Prostate gland (tissue), 2 donors: ENCODE measurements at regions of chr5 and their contacts with region 1.

Region 1: GRCh38 chr5:179821581-179822432 is 1.1 kb downstream of the SQSTM1 start:
- DNase-seq: peak; percentile 97
- H3K4me3 ChIP-seq: peak overlapping the region; percentile 98 to 100
- H3K27ac ChIP-seq: peak overlapping the region; percentile 100
- H3K4me1 ChIP-seq: peaks cover 32% of the 10 kb centered on the region
- H3K27me3 ChIP-seq: no peaks in the 10 kb centered on the region
- CTCF ChIP-seq: peak in 1 of 4 experiments; percentile 37
- POLR2A ChIP-seq: peak; percentile 97

Region 2: GRCh38 chr5:179697993-179698934 is 123.5 kb before region 1 on chr5:
- intact Hi-C with region 1: loop called (anchors 5 kb)
- DNase-seq: peak; percentile 99
- H3K4me3 ChIP-seq: peak overlapping the region; percentile 77 to 98
- H3K27ac ChIP-seq: peak overlapping the region; percentile 91 to 95
- H3K4me1 ChIP-seq: no peaks in the 10 kb centered on the region
- H3K27me3 ChIP-seq: no peaks in the 10 kb centered on the region
- CTCF ChIP-seq: peak in 2 of 4 experiments; percentile 10 to 44
- POLR2A ChIP-seq: peak; percentile 82

Region 3: DNA sequence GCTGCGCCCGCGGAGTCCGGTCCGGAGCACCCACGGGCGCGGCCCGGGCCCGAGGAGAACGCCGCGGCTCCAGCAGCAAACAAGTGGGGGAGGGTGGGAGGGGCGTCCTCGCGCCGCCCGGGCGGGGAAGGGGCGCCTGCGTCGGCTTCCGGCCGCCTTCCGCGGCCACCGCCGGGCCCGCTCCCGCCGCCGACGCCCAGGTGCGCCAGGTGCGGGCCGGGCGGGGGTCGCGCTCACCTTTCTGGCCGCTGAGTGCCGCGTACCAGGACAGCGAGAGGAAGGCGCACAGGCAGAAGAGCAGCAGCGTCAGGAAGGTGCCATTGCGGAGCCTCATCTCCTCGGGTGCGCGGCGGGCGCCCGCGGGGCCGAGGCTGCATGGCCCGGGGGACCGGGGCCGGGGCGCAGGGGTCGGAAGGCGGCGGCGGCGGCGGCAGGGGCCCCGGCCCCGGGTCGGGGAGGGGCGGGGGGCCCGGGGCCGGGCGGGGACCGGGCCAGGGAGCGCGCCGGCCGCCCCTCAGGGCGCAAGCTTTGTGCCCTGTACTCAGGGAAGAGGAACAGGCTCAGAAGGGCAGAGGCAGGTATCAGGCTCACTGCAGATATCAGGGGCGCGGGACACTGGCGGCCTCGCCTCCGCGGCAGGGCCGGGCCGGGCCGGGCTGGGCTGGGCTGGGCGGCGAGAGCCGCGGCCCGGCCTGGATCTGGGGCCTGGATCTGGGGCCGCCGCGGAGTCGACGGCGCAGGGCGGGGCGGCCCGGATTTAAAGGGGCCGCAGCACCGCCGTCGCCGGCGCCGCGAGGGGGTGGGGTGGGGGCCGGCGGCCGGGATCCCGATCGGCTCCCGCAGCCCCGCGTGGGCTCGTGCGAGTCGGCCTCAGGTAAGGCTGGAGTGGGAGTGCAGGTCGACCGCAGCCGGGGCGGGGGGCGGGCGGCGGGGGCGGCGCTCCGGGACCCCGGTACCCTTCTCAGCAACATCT is 15.3 kb before region 1 on chr5 and contains the start of gene MGAT4B:
- intact Hi-C with region 1: loop called (anchors 2 kb)
- DNase-seq: peak; percentile 71
- H3K4me3 ChIP-seq: peak within 1 kb of the TSS; percentile 79 to 85
- H3K27ac ChIP-seq: peak within 1 kb of the TSS; percentile 94 to 95
- H3K4me1 ChIP-seq: peaks cover 12% of the 10 kb centered on the region
- H3K27me3 ChIP-seq: no peaks in the 10 kb centered on the region
- CTCF ChIP-seq: peak in 2 of 4 experiments; percentile 4 to 14
- POLR2A ChIP-seq: peak; percentile 72
- total RNA-seq, gene MGAT4B: 82.7 to 142 TPM

Region 4: DNA sequence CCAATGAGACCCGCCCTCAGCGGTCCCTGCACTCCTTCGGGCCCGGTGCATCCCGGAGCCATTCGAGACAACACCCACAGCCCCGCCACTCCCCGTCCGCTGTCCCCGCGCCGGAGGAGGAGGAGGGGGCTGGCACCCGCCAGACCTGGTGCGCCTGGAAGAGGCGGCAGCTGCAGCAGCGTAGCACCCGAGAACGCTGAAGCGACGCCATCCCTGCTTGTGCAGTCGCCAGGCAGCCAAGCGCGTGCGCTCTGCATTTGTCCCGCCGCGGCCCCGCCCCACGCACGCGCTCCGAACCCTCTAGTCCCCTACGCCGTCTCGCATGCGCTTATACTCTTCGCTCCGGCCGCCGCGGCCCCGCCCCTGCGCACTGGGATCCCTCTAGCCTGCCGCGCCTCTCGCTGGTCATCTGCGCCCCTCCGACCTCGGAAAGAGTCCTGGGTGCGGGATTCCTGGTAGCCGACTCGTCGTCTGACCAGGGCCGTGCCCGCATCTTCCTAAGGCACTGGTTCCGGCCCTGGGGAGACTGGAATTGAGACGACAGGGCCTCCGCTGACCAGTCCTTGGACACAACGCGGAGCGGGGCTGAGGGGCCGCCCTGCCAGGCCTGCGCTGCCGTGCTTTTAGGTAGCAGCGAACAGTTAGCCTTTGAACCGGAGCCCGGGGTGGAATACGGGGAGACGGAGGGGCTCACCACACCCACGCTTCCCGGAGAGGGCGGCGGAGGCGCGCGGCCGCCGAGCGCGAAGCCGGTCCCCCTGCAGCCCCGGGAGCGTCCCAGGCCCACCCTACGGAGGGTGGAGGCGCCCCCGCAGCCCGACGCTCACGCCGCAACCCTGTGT is 37.0 kb after region 1 on chr5 and contains the start of gene MRNIP:
- intact Hi-C with region 1: loop called (anchors 5 kb)
- DNase-seq: peak; percentile 97
- H3K4me3 ChIP-seq: peak within 1 kb of the TSS; percentile 63 to 85
- H3K27ac ChIP-seq: peak within 1 kb of the TSS; percentile 81 to 95
- H3K4me1 ChIP-seq: no peaks in the 10 kb centered on the region
- H3K27me3 ChIP-seq: no peaks in the 10 kb centered on the region
- CTCF ChIP-seq: peak in 3 of 4 experiments; percentile 23 to 44 (median 42)
- POLR2A ChIP-seq: peak; percentile 91
- total RNA-seq, gene MRNIP: 30.0 to 55.2 TPM

Region 5: DNA sequence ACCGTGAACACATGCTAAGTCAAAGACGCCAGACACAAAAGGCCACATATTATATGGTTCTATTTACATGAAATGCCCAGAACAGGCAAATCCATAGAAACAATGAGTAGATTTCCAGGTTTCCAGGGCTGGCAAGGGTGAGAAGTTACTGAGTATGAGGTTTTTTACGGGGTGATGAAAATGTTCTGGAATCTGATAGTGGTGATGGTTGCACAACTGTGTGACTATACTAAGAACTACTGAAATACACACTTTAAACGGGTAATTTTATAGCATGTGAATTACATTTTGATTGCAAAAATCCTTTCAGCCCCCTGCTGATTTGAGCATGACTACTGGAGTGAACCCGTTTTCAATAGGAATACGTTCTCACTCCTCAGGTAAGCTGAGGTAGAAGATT is 132.6 kb after region 1 on chr5:
- intact Hi-C with region 1: no loop called
- DNase-seq: no peak
- H3K4me3 ChIP-seq: no peak overlapping the region
- H3K27ac ChIP-seq: no peak overlapping the region
- H3K4me1 ChIP-seq: no peaks in the 10 kb centered on the region
- H3K27me3 ChIP-seq: no peaks in the 10 kb centered on the region
- CTCF ChIP-seq: no peak
- POLR2A ChIP-seq: no peak

Region 6: GRCh38 chr5:180007582-180007981 is 185.8 kb after region 1 on chr5:
- intact Hi-C with region 1: no loop called
- DNase-seq: no peak
- H3K4me3 ChIP-seq: no peak overlapping the region
- H3K27ac ChIP-seq: no peak overlapping the region
- H3K4me1 ChIP-seq: no peaks in the 10 kb centered on the region
- H3K27me3 ChIP-seq: no peaks in the 10 kb centered on the region
- CTCF ChIP-seq: no peak
- POLR2A ChIP-seq: no peak